AG04449 (cell line): ENCODE measurements at regions of chr3 and their contacts with region 1.

Region 1: GRCh38 chr3:141452036-141452435 is 34.8 kb upstream of the RASA2 start:
- DNase-seq: no peak
- H3K4me3 ChIP-seq: no peak overlapping the region
- CTCF ChIP-seq: peak; percentile 70

Region 2: GRCh38 chr3:141294848-141295247 is 157.2 kb before region 1 on chr3:
- CTCF ChIA-PET with region 1: interaction called, 624 read pairs
- POLR2A ChIA-PET with region 1: no interaction called
- DNase-seq: peak; percentile 57
- H3K4me3 ChIP-seq: no peak overlapping the region
- CTCF ChIP-seq: no peak

Region 3: GRCh38 chr3:141331377-141332318 is 120.4 kb before region 1 on chr3:
- CTCF ChIA-PET with region 1: interaction called, 29 read pairs
- POLR2A ChIA-PET with region 1: interaction called, 3 read pairs
- DNase-seq: peak; percentile 90
- H3K4me3 ChIP-seq: no peak overlapping the region
- CTCF ChIP-seq: no peak

Region 4: GRCh38 chr3:141386611-141387111 is 65.4 kb before region 1 on chr3:
- CTCF ChIA-PET with region 1: interaction called, 11 read pairs
- POLR2A ChIA-PET with region 1: interaction called, 4 read pairs
- DNase-seq: no peak
- H3K4me3 ChIP-seq: no peak overlapping the region
- CTCF ChIP-seq: no peak

Region 5: GRCh38 chr3:141441381-141442364 is 10.4 kb before region 1 on chr3:
- CTCF ChIA-PET with region 1: interaction called, 78 read pairs
- POLR2A ChIA-PET with region 1: no interaction called
- DNase-seq: peak; percentile 73
- H3K4me3 ChIP-seq: no peak overlapping the region
- CTCF ChIP-seq: peak; percentile 70

Region 6: GRCh38 chr3:141603475-141604035 is 151.5 kb after region 1 on chr3:
- CTCF ChIA-PET with region 1: no interaction called
- POLR2A ChIA-PET with region 1: no interaction called
- DNase-seq: no peak
- H3K4me3 ChIP-seq: no peak overlapping the region
- CTCF ChIP-seq: no peak

Region 7: GRCh38 chr3:141707741-141708203 is 255.7 kb after region 1 on chr3:
- CTCF ChIA-PET with region 1: no interaction called
- POLR2A ChIA-PET with region 1: no interaction called
- DNase-seq: peak; percentile 57
- H3K4me3 ChIP-seq: no peak overlapping the region
- CTCF ChIP-seq: no peak